Activated naive CD4-positive, alpha-beta T cell treated with anti-CD3 and anti-CD28 coated beads for 36 hours (primary cell): ENCODE measurements at regions of chr22 and their contacts with region 1.

Region 1: DNA sequence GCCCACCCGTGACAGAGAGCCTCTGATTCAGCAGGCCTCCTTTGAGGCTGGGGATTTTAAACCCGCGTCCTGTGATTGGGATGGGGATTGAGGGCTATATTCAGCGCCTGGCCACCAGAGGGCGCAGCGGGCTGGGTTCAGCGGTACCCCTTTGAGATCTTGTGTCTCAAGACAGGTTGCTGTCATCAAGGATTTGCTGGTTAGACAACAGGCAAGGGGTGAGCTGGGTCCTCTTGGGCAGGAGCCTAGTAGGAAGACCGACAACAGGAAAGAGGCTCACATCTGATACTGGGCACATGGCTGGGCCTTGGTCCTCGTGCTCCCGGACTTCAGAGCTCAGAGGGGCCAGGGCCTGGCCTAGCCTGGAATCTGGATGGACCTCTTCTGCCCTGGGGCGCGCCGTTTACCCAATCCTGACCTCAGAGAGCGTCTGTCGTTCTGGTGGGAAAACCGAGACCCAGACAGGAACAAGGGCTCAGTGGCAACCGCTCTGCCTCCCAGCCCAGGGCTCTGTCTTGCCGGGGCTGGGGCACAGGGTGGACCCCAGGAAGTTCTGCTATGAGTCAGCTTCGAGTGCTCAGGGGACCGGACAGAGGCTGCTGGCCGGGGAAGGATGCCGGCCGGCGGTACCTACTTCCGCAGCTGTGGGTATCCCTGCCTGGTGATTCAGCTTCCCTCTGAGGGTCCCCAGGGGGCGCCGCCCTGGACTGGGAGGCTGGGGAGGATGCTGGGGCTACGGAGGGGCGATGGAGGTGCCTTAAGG is 929 bp upstream of the SLC35E4 start:
- DNase-seq: peak; percentile 96
- H3K4me3 Mint-ChIP-seq: peak overlapping the region; percentile 75
- H3K27ac Mint-ChIP-seq: peak overlapping the region; percentile 67
- H3K4me1 Mint-ChIP-seq: peaks cover 19% of the 10 kb centered on the region
- H3K27me3 Mint-ChIP-seq: no peaks in the 10 kb centered on the region

Region 2: DNA sequence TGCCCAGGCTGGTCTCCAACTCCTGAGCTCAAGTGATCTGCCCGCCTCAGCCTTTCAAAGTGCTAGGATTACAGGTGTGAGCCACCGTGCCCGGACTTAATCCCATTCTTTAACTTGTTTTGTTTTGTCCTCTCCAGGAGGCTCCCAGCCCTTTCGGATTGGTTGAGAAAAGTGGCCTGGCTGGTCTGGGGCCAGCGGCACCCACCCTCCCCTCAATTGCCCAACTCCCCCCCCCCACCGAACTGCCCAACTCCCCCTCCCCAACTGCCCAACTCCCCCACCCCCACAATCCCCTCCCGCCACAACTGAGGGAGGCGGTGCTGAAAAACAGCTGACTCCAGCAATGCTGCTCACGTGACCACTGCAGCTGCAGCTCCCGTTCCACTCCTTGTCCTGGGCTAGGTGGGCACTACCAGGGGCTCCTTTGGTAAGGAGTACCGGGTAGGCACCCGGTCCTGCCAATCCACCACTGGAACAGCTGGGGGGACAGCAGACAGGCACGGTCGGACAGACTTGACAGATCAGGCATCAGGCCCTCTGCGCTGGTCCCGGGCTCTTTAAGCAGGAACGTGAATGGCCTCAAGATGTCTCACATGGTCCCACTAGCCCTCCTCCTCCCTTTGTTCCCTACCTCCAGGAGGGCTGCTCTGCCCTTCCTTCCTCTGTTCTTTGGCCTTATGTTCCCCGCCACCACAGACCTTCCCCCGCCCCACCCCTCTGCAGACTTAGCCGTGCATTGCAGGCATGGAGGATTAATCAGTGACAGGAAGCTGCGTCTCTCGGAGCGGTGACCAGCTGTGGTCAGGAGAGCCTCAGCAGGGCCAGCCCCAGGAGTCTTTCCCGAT is 28.0 kb before region 1 on chr22 and contains the start of gene TCN2:
- CTCF ChIA-PET with region 1: interaction called, 9 read pairs
- intact Hi-C with region 1: loop called (anchors 2 kb)
- DNase-seq: peak; percentile 78
- H3K4me3 Mint-ChIP-seq: peak within 1 kb of the TSS; percentile 74
- H3K27ac Mint-ChIP-seq: no peak within 1 kb of the TSS
- H3K4me1 Mint-ChIP-seq: peaks cover 33% of the 10 kb centered on the region
- H3K27me3 Mint-ChIP-seq: no peaks in the 10 kb centered on the region
- total RNA-seq, gene TCN2: 0.19 to 0.22 TPM

Region 3: DNA sequence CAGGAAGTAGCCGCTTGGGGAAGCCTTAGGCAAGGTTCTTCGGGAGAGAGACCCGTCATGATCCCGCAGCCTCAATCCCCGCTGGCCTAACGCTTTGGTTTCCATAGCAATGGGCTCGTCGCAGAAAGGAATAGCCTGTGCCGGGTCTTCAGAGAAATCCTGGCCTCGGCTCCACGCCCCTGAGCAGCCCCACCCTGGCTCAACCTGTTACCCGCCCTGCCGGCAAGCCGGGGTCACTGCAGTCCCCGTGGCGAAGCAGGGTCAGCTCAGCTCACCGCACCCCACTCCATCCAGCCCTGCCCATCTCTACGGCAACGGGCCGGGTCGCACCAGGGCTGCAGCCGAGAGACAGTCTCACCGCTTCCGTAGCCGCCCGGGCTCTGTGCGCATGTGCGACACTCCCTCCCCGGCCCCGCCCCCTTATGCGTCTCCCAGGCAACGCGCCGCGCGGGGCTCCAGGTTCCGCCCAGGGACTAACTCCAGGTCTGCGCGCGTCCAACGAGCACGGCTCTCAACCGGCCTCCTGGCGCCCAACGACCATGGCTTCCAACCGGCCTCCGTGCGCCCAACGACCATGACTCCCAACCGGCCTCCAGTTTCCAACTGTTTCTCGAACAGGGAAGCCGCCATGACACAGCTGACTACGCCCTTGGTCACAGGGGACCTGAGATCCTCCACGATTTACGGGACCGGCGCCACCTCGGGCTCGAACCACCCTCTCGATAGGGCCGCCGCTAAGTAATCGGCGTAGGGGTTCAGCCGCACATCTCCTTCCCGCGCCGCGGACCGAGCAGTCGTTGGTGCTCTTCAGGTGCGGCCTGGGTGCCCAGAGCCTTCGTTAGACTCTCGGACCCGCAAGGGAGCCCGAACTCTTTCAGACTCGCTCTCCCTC is 33.1 kb after region 1 on chr22 and contains the start of gene DUSP18:
- CTCF ChIA-PET with region 1: interaction called, 3 read pairs
- intact Hi-C with region 1: loop called (anchors 1 kb)
- DNase-seq: peak; percentile 94
- H3K4me3 Mint-ChIP-seq: peak within 1 kb of the TSS; percentile 98
- H3K27ac Mint-ChIP-seq: peak within 1 kb of the TSS; percentile 22
- H3K4me1 Mint-ChIP-seq: peaks cover 17% of the 10 kb centered on the region
- H3K27me3 Mint-ChIP-seq: no peaks in the 10 kb centered on the region
- total RNA-seq, gene DUSP18: 4.7 to 5.6 TPM

Region 4: GRCh38 chr22:30742291-30743256 is 107.9 kb after region 1 on chr22:
- CTCF ChIA-PET with region 1: interaction called, 14 read pairs
- intact Hi-C with region 1: loop called (anchors 1 kb)
- DNase-seq: peak; percentile 66
- H3K4me3 Mint-ChIP-seq: no peak overlapping the region
- H3K27ac Mint-ChIP-seq: peak overlapping the region; percentile 83
- H3K4me1 Mint-ChIP-seq: peaks cover 60% of the 10 kb centered on the region
- H3K27me3 Mint-ChIP-seq: peaks cover 6% of the 10 kb centered on the region

Region 5: GRCh38 chr22:30763815-30764686 is 129.4 kb after region 1 on chr22:
- CTCF ChIA-PET with region 1: interaction called, 156 read pairs
- intact Hi-C with region 1: no loop called
- DNase-seq: peak; percentile 79
- H3K4me3 Mint-ChIP-seq: no peak overlapping the region
- H3K27ac Mint-ChIP-seq: no peak overlapping the region
- H3K4me1 Mint-ChIP-seq: peaks cover 2% of the 10 kb centered on the region
- H3K27me3 Mint-ChIP-seq: no peaks in the 10 kb centered on the region

Region 6: GRCh38 chr22:30866811-30867271 is 232.2 kb after region 1 on chr22:
- CTCF ChIA-PET with region 1: no interaction called
- intact Hi-C with region 1: no loop called
- DNase-seq: no peak
- H3K4me3 Mint-ChIP-seq: no peak overlapping the region
- H3K27ac Mint-ChIP-seq: no peak overlapping the region
- H3K4me1 Mint-ChIP-seq: no peaks in the 10 kb centered on the region
- H3K27me3 Mint-ChIP-seq: no peaks in the 10 kb centered on the region

Region 7: GRCh38 chr22:30927806-30928205 is 293.2 kb after region 1 on chr22:
- CTCF ChIA-PET with region 1: no interaction called
- intact Hi-C with region 1: no loop called
- DNase-seq: no peak
- H3K4me3 Mint-ChIP-seq: no peak overlapping the region
- H3K27ac Mint-ChIP-seq: no peak overlapping the region
- H3K4me1 Mint-ChIP-seq: peaks cover 10% of the 10 kb centered on the region
- H3K27me3 Mint-ChIP-seq: no peaks in the 10 kb centered on the region